Ovary (tissue), 10 donors: ENCODE measurements at regions of chr17 and their contacts with region 1.

Region 1: GRCh38 chr17:2011411-2012371 is 13.4 kb downstream of the RTN4RL1 start:
- DNase-seq: no peak
- H3K4me3 ChIP-seq: no peak overlapping the region
- H3K27ac ChIP-seq: peak overlapping the region; percentile 13 to 54
- H3K4me1 ChIP-seq: peaks cover 5% of the 10 kb centered on the region
- H3K27me3 ChIP-seq: no peaks in the 10 kb centered on the region
- CTCF ChIP-seq: no peak
- EP300 ChIP-seq: no peak
- POLR2A ChIP-seq: no peak

Region 2: GRCh38 chr17:1958134-1958881 is 53.4 kb before region 1 on chr17:
- intact Hi-C with region 1: loop called in 1 of 4 experiments (anchors 10 kb)
- DNase-seq: no peak
- H3K4me3 ChIP-seq: no peak overlapping the region
- H3K27ac ChIP-seq: no peak overlapping the region
- H3K4me1 ChIP-seq: no peaks in the 10 kb centered on the region
- H3K27me3 ChIP-seq: no peaks in the 10 kb centered on the region
- CTCF ChIP-seq: no peak
- EP300 ChIP-seq: no peak
- POLR2A ChIP-seq: no peak

Region 3: GRCh38 chr17:2030779-2031163 is 19.1 kb after region 1 on chr17:
- intact Hi-C with region 1: no loop called
- DNase-seq: no peak
- H3K4me3 ChIP-seq: peak overlapping the region; percentile 97
- H3K27ac ChIP-seq: peak overlapping the region in 1 of 2 donors; percentile 6
- H3K4me1 ChIP-seq: peaks cover 5% of the 10 kb centered on the region
- H3K27me3 ChIP-seq: no peaks in the 10 kb centered on the region
- CTCF ChIP-seq: peak in 1 of 3 donors; percentile 8
- EP300 ChIP-seq: no peak
- POLR2A ChIP-seq: no peak